IMR-90 (cell line): ENCODE measurements at regions of chr4 and their contacts with region 1.

Region 1: DNA sequence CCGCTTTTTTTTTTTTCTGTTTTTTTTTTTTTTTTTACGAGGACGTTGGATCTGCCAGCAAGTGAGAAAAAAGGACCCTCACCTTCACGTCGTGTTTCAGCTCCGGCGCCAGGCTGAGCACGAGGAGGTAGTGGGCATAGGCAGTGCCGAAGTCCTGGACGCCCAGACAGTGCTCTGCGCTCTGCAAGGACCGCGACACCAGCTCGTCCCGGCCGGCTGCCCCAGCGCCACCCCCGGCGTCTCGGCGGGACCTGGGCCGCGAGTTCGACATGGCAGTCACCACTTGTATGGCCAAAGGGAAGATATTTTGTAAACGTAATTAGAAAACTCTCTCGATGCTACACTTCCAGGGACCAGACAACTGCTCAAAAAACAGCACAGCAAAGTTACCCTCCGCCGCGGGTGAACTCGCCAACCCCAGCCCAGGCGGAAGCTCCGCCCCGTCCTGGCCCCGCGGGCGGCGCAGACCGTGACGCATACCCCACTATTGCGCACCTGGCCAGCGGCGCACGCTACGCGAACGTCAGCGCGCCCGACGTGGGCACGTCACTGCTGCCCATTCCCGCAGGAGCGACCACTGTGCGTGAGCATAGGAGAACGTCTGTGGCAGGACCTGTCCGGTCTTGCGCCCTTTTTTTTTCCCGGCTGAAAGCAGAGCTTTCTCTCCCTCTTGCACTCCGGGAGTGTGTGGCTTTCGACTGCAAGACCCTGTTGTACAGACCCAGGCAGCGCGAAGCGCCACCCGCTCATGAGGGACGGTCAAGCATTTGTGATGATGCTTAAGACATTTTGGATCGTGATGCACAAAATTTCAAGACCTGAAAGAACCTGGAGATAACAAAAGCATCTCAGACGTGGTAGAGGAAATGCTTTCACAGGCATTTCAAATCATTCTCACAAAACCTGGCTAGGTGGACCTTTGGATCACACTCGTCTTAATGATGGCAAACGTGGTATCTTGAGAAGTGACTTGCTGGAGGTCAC is at the start of gene PRMT9:
- DNase-seq: peak; percentile 97
- ATAC-seq: peak; percentile 99
- H3K4me3 ChIP-seq: peak within 1 kb of the TSS; percentile 82
- H3K27ac ChIP-seq: peak within 1 kb of the TSS; percentile 87
- H3K4me1 ChIP-seq: no peaks in the 10 kb centered on the region
- H3K27me3 ChIP-seq: no peaks in the 10 kb centered on the region
- CTCF ChIP-seq: no peak
- POLR2A ChIP-seq: peak; percentile 94
- RAD21 ChIP-seq: no peak; the same call in 1 of the 2 replicates
- total RNA-seq, gene PRMT9: 14.2 and 15.6 TPM in 2 replicates

Region 2: GRCh38 chr4:147525494-147526271 is 158.3 kb before region 1 on chr4:
- CTCF ChIA-PET with region 1: no interaction called
- POLR2A ChIA-PET with region 1: interaction called, 19 read pairs
- dilution Hi-C with region 1: no loop called
- in situ Hi-C with region 1: no loop called
- intact Hi-C with region 1: no loop called
- DNase-seq: no peak
- ATAC-seq: no peak
- H3K4me3 ChIP-seq: no peak overlapping the region
- H3K27ac ChIP-seq: no peak overlapping the region
- H3K4me1 ChIP-seq: 0 out of 2 replicates have a peak, but pooled peaks cover 1% of the 10 kb centered on the region
- H3K27me3 ChIP-seq: no peaks in the 10 kb centered on the region
- CTCF ChIP-seq: no peak
- POLR2A ChIP-seq: no peak
- RAD21 ChIP-seq: no peak